ENCODE measurements at regions of chr3 and their contacts with region 1.

Region 1: GRCh38 chr3:32296256-32297204 is 58.0 kb downstream of the CMTM8 start:
- DNase-seq: peak; percentile 61 to 75 (median 63)
- H3K4me3 ChIP-seq: peak overlapping the region in 2 of 7 experiments; percentile 4 to 34
- H3K27ac ChIP-seq: no peak overlapping the region
- H3K4me1 ChIP-seq: peaks cover 0 to 10% (median 5%) of the 10 kb centered on the region in 4 experiments
- H3K27me3 ChIP-seq: no peaks in the 10 kb centered on the region

Region 2: DNA sequence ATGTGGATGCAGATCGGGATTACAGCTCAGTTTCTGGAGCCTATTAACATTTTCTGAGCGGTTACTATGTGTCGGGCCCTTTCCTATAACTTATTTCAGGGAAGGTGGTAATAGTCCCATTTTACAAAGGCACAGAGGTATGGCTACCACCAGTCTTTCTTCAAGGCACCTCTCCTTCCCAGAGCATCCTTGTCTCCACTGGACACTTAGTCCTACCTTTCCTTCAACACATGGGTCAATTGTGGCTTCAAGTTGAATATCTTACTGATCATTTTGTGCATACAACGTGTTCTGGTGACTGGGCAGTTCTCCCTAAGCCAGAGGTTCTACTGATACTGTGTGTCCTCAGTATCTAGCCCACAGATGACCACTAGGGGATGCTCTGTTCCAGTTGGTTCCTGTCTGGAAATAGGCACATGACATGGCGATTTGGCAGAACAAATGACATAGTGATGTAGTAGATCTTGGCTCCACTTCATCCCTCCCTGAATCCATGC is 118.8 kb before region 1 on chr3:
- CTCF ChIA-PET with region 1: interaction called, 32 read pairs
- POLR2A ChIA-PET with region 1: no interaction called
- DNase-seq: peak; percentile 85 to 86 (median 85)
- H3K4me3 ChIP-seq: peak overlapping the region in 1 of 7 experiments; percentile 30
- H3K27ac ChIP-seq: no peak overlapping the region
- H3K4me1 ChIP-seq: peaks cover 0 to 8% (median 4%) of the 10 kb centered on the region in 4 experiments
- H3K27me3 ChIP-seq: no peaks in the 10 kb centered on the region

Region 3: GRCh38 chr3:32208447-32208846 is 88.1 kb before region 1 on chr3:
- CTCF ChIA-PET with region 1: no interaction called
- POLR2A ChIA-PET with region 1: no interaction called
- DNase-seq: peak; percentile 5 to 67 (median 55)
- H3K4me3 ChIP-seq: no peak overlapping the region
- H3K27ac ChIP-seq: no peak overlapping the region
- H3K4me1 ChIP-seq: no peaks in the 10 kb centered on the region
- H3K27me3 ChIP-seq: no peaks in the 10 kb centered on the region

Region 4: GRCh38 chr3:32238453-32239306 is 57.9 kb before region 1 on chr3 and contains the start of gene CMTM8:
- CTCF ChIA-PET with region 1: interaction called, 15 read pairs
- POLR2A ChIA-PET with region 1: no interaction called
- DNase-seq: peak; percentile 43 to 77 (median 68)
- H3K4me3 ChIP-seq: peak within 1 kb of the TSS; percentile 43 to 83 (median 74)
- H3K27ac ChIP-seq: no peak within 1 kb of the TSS
- H3K4me1 ChIP-seq: peaks cover 0 to 24% (median 23%) of the 10 kb centered on the region in 4 experiments
- H3K27me3 ChIP-seq: no peaks in the 10 kb centered on the region

Region 5: DNA sequence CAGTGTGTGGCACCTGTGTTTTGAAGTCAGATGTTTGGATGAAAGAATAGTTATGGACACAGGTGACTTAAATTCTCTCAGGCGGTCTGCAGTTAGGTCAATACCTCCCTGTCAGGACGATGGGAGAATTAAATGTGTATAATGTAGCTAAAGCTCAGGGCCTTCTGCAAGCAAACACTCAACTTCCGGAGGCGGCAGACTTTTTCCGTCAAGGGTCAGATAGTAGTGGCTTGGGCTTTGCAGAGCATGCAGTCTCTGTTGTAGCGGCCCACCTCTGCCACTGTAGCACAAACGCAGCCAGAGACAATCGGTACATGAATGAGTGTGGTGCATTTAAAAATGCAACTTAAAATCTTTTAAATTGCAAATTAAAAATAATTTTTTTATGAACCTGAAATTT is 10.6 kb before region 1 on chr3:
- CTCF ChIA-PET with region 1: interaction called, 26 read pairs
- POLR2A ChIA-PET with region 1: no interaction called
- DNase-seq: peak in 1 of 3 donors; percentile 17
- H3K4me3 ChIP-seq: peak overlapping the region in 1 of 7 experiments; percentile 5
- H3K27ac ChIP-seq: no peak overlapping the region
- H3K4me1 ChIP-seq: peaks cover 12 to 43% (median 28%) of the 10 kb centered on the region in 4 experiments
- H3K27me3 ChIP-seq: no peaks in the 10 kb centered on the region

Region 6: GRCh38 chr3:32313723-32314473 is 17.4 kb after region 1 on chr3:
- CTCF ChIA-PET with region 1: interaction called, 11 read pairs
- POLR2A ChIA-PET with region 1: interaction called, 3 read pairs
- DNase-seq: peak in 2 of 3 donors; percentile 38 to 58
- H3K4me3 ChIP-seq: no peak overlapping the region
- H3K27ac ChIP-seq: no peak overlapping the region
- H3K4me1 ChIP-seq: peaks cover 12 to 44% (median 31%) of the 10 kb centered on the region in 4 experiments
- H3K27me3 ChIP-seq: no peaks in the 10 kb centered on the region

Region 7: GRCh38 chr3:32334675-32335074 is 38.1 kb after region 1 on chr3:
- CTCF ChIA-PET with region 1: interaction called, 76 read pairs
- POLR2A ChIA-PET with region 1: no interaction called
- DNase-seq: peak; percentile 46 to 60 (median 56)
- H3K4me3 ChIP-seq: no peak overlapping the region
- H3K27ac ChIP-seq: no peak overlapping the region
- H3K4me1 ChIP-seq: no peaks in the 10 kb centered on the region
- H3K27me3 ChIP-seq: no peaks in the 10 kb centered on the region

Region 8: DNA sequence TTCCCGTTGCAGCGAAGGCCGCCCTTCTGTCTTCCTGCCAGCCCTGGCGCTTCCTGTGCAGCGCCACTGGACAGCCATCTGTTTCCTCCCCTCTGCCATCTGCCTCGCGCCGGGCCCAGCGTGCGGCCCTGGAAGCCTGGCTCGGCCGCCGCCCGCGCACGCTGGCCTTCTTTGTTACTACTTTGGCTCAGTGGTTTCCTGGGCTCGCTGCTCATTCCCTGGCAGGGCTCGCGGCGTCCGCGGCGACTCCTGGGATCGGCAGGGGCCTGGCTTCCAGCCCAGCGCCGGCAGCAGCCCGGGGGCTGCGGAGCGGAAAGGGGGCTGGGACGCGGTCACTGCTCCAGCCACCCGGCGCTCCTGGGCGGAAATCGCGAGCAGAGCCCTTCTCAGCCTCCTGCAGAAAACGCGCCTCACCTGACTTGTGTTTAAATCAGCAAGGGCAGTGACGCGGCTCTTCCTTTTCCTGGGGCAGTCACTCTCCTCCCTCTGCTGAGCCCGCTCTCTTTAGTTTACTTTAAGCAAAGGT is 105.1 kb after region 1 on chr3:
- CTCF ChIA-PET with region 1: no interaction called
- POLR2A ChIA-PET with region 1: no interaction called
- DNase-seq: peak; percentile 80 to 98 (median 97)
- H3K4me3 ChIP-seq: peak overlapping the region in 5 of 7 experiments; percentile 23 to 69 (median 64)
- H3K27ac ChIP-seq: peak overlapping the region; percentile 84 to 91
- H3K4me1 ChIP-seq: peaks cover 25 to 90% (median 64%) of the 10 kb centered on the region in 4 experiments
- H3K27me3 ChIP-seq: no peaks in the 10 kb centered on the region

Region 9: GRCh38 chr3:32570421-32571191 is 274.1 kb after region 1 on chr3 and contains the start of gene DYNC1LI1:
- CTCF ChIA-PET with region 1: no interaction called
- POLR2A ChIA-PET with region 1: no interaction called
- DNase-seq: peak; percentile 90 to 95 (median 94)
- H3K4me3 ChIP-seq: peak within 1 kb of the TSS; percentile 80 to 98 (median 95)
- H3K27ac ChIP-seq: peak within 1 kb of the TSS; percentile 68 to 90
- H3K4me1 ChIP-seq: peaks cover 7 to 42% (median 23%) of the 10 kb centered on the region in 4 experiments
- H3K27me3 ChIP-seq: no peaks in the 10 kb centered on the region